GM12878 (cell line): ENCODE measurements at regions of chr11 and their contacts with region 1.

Region 1: DNA sequence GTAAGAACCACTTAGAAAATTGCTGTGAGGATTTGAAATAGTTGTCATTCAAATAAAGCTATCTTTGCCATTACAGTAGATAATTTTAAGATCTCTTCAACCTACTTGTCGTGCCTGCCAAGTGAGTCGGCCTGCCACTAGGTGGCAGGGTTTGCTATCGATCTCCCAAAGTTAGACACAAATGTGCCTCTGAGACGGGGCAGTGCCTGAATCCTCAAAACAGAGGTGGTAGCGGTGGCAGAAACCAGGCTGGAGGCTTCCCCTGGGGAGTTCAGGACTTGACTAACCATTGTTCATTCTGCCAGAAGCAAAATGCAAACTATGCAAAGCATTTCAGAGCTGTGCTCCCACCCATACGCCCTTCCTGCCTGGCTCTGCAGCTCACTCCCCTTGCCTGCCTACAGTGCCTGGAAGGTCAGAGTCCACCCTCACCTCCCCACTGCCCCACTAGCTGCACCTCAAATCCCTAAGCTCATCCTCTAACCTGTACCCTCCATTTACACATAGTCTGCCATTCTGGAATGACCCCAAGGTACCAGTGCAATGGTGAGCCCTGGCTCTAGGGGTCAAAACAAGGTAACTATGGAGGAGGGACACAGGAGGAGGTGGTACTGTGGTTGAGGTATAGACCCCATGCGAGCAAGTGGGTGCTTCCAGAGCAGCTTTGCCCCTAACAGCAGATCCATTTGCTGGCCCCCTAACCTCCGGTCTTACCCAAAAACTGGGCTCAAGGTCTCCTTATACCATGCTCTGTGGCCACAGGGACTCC is 82.1 kb downstream of the C11orf58 start:
- DNase-seq: peak; percentile 42
- ATAC-seq: peak; percentile 97
- H3K4me3 ChIP-seq: no peak overlapping the region
- H3K27ac ChIP-seq: no peak overlapping the region
- H3K4me1 ChIP-seq: peaks cover 3% of the 10 kb centered on the region; the same call in 1 of the 2 replicates
- H3K27me3 ChIP-seq: no peaks in the 10 kb centered on the region
- CTCF ChIP-seq: peak; percentile 83 to 92 (median 89)
- EP300 ChIP-seq: no peak
- POLR2A ChIP-seq: no peak
- RAD21 ChIP-seq: peak; percentile 81

Region 2: GRCh38 chr11:16722581-16723344 is 97.7 kb before region 1 on chr11:
- CTCF ChIA-PET with region 1: no interaction called
- POLR2A ChIA-PET with region 1: no interaction called
- RAD21 ChIA-PET with region 1: no interaction called
- SMC1A ChIA-PET with region 1: no interaction called
- in situ Hi-C with region 1: no loop called
- intact Hi-C with region 1: no loop called
- DNase-seq: no peak
- ATAC-seq: no peak
- H3K4me3 ChIP-seq: no peak overlapping the region
- H3K27ac ChIP-seq: no peak overlapping the region
- H3K4me1 ChIP-seq: no peaks in the 10 kb centered on the region
- H3K27me3 ChIP-seq: no peaks in the 10 kb centered on the region
- CTCF ChIP-seq: no peak
- EP300 ChIP-seq: no peak
- POLR2A ChIP-seq: no peak
- RAD21 ChIP-seq: no peak

Region 3: DNA sequence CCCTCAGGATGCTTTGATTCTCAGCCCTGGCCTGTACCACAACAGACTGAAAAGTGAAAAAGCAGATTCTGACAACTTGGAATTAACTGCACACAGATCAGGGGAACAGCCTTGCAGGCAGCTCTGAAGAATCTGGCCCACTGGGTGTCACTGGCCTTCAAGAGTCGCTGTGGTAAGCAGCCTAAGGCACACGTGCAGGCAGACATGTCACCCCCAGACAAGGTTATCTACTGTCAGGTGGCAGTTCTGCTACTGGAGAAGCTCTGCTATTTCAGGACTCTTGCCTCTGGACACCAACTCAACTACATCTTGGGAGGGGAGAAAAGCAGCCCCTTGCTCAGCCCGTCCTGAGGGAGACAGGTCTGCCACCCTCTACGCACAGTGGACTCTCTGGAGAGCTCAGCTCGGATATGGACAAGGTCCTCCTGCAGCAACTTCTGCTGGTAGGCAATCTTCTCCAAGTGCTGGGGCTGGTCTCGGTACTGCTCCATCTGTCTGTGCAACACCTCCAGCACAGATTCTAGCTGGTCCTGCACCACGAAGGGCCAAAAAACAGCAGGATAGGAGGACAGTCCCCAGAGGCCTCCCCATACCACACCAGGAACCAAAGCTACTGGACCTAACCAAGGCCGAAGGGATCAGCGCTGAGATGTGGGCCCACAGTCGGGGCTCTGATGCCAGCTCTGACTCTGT is 19.1 kb before region 1 on chr11:
- CTCF ChIA-PET with region 1: interaction called, 11 read pairs
- POLR2A ChIA-PET with region 1: no interaction called
- RAD21 ChIA-PET with region 1: interaction called, 3 read pairs
- SMC1A ChIA-PET with region 1: interaction called, 3 read pairs
- in situ Hi-C with region 1: no loop called
- intact Hi-C with region 1: no loop called
- DNase-seq: no peak
- ATAC-seq: no peak
- H3K4me3 ChIP-seq: no peak overlapping the region
- H3K27ac ChIP-seq: no peak overlapping the region
- H3K4me1 ChIP-seq: 0 out of 2 replicates have a peak, but pooled peaks cover 4% of the 10 kb centered on the region
- H3K27me3 ChIP-seq: peaks cover 2% of the 10 kb centered on the region in 2 experiments; a peak in 1 of 4 replicates
- CTCF ChIP-seq: no peak
- EP300 ChIP-seq: no peak
- POLR2A ChIP-seq: no peak
- RAD21 ChIP-seq: no peak

Region 4: DNA sequence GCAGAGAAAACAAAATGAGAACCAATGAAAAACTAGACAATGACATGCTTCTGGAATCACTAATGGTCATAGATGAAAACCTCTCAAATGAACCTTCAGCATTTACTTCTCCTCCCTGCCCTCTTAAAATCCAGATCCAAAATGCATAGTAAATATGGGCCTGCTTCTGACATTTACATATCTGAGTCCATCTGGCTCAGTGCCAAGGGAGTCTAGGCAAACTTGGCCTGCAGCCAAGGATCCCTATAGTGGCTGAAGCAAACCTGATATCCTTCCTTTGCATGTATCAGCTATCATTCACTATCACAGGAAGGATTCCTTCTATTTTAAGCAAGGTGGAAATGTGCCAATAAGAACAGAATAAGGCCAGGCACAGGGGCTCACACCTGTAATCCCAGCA is 22.8 kb after region 1 on chr11:
- CTCF ChIA-PET with region 1: interaction called, 16 read pairs
- POLR2A ChIA-PET with region 1: no interaction called
- RAD21 ChIA-PET with region 1: interaction called, 3 read pairs
- SMC1A ChIA-PET with region 1: no interaction called
- in situ Hi-C with region 1: no loop called
- intact Hi-C with region 1: no loop called
- DNase-seq: no peak
- ATAC-seq: no peak
- H3K4me3 ChIP-seq: no peak overlapping the region
- H3K27ac ChIP-seq: no peak overlapping the region
- H3K4me1 ChIP-seq: no peaks in the 10 kb centered on the region
- H3K27me3 ChIP-seq: no peaks in the 10 kb centered on the region
- CTCF ChIP-seq: no peak
- EP300 ChIP-seq: no peak
- POLR2A ChIP-seq: no peak
- RAD21 ChIP-seq: no peak

Region 5: DNA sequence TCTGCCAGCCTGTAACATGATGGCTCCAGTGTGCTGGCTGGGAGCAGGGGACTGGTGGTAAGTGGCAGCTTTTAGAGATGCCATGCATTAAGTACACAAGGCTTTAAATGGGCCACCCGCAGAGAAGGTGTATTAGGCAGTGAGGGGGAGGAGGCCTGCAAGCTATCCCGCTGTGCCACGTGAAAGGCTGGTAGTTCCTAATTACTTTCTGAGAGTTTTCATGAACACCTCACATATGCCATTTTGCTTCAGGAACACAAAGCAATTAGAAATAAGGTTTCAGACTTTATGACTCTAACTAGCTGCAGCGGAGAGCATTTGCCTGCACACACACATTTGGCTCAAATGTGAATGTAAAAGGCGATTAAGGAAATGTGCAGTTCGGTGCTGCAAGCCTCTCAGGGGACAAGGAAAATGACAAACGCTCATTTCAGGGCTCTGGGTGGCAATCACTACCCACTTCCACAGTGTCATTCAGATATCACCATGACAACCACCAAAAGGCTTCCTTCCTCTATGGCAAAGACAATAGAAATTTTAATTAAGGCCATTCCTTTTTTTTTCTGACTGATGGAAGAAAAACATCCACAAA is 77.1 kb after region 1 on chr11:
- CTCF ChIA-PET with region 1: interaction called, 21 read pairs
- POLR2A ChIA-PET with region 1: interaction called, 7 read pairs
- RAD21 ChIA-PET with region 1: interaction called, 10 read pairs
- SMC1A ChIA-PET with region 1: interaction called, 17 read pairs
- in situ Hi-C with region 1: no loop called
- intact Hi-C with region 1: no loop called
- DNase-seq: no peak
- ATAC-seq: no peak
- H3K4me3 ChIP-seq: no peak overlapping the region
- H3K27ac ChIP-seq: no peak overlapping the region
- H3K4me1 ChIP-seq: peaks cover 13% of the 10 kb centered on the region
- H3K27me3 ChIP-seq: no peaks in the 10 kb centered on the region
- CTCF ChIP-seq: no peak
- EP300 ChIP-seq: no peak
- POLR2A ChIP-seq: no peak
- RAD21 ChIP-seq: no peak

Region 6: DNA sequence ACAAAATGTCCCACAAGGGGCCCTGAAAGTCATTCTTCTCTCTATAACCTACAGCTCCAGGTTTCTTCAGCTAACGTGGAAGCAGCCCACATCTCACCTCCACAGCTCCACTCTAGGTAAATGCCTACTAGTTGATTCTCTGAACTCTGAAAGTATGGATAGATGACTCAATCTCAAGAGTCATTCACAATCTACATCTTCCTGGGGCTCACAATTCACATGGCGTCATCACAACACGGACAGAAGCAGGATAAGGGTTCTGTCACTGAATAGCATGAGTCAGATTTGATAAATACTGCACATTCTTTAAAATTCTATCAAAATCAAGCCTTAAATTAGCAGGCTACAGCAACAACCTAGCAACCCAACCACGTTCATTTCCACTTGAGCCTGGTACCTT is 97.4 kb after region 1 on chr11:
- CTCF ChIA-PET with region 1: interaction called, 19 read pairs
- POLR2A ChIA-PET with region 1: no interaction called
- RAD21 ChIA-PET with region 1: interaction called, 12 read pairs
- SMC1A ChIA-PET with region 1: interaction called, 8 read pairs
- in situ Hi-C with region 1: no loop called
- intact Hi-C with region 1: no loop called
- DNase-seq: no peak
- ATAC-seq: no peak
- H3K4me3 ChIP-seq: no peak overlapping the region
- H3K27ac ChIP-seq: no peak overlapping the region
- H3K4me1 ChIP-seq: no peaks in the 10 kb centered on the region
- H3K27me3 ChIP-seq: no peaks in the 10 kb centered on the region
- CTCF ChIP-seq: no peak
- EP300 ChIP-seq: no peak
- POLR2A ChIP-seq: no peak
- RAD21 ChIP-seq: no peak

Region 7: GRCh38 chr11:17063171-17064002 is 242.9 kb after region 1 on chr11:
- CTCF ChIA-PET with region 1: interaction called, 53 read pairs
- POLR2A ChIA-PET with region 1: interaction called, 6 read pairs
- RAD21 ChIA-PET with region 1: interaction called, 37 read pairs
- SMC1A ChIA-PET with region 1: interaction called, 47 read pairs
- in situ Hi-C with region 1: no loop called
- intact Hi-C with region 1: loop called (anchors 1 kb)
- DNase-seq: peak; percentile 17
- ATAC-seq: peak; percentile 100
- H3K4me3 ChIP-seq: no peak overlapping the region
- H3K27ac ChIP-seq: no peak overlapping the region
- H3K4me1 ChIP-seq: no peaks in the 10 kb centered on the region
- H3K27me3 ChIP-seq: no peaks in the 10 kb centered on the region
- CTCF ChIP-seq: peak; percentile 73 to 91 (median 83)
- EP300 ChIP-seq: no peak
- POLR2A ChIP-seq: no peak
- RAD21 ChIP-seq: peak; percentile 95

Region 8: GRCh38 chr11:17164361-17165246 is 344.1 kb after region 1 on chr11:
- CTCF ChIA-PET with region 1: no interaction called
- POLR2A ChIA-PET with region 1: no interaction called
- RAD21 ChIA-PET with region 1: no interaction called
- SMC1A ChIA-PET with region 1: no interaction called
- in situ Hi-C with region 1: no loop called
- intact Hi-C with region 1: no loop called
- DNase-seq: no peak
- ATAC-seq: peak; percentile 56
- H3K4me3 ChIP-seq: no peak overlapping the region
- H3K27ac ChIP-seq: peak overlapping the region; percentile 56
- H3K4me1 ChIP-seq: peaks cover 21% of the 10 kb centered on the region
- H3K27me3 ChIP-seq: no peaks in the 10 kb centered on the region
- CTCF ChIP-seq: no peak
- EP300 ChIP-seq: no peak
- POLR2A ChIP-seq: no peak
- RAD21 ChIP-seq: no peak